Activated T-helper 1 cell treated with anti-CD3 and anti-CD28 coated beads, Interleukin-12 subunit alpha, Interleukin-12 subunit beta, Interleukin-2, Interleukin-4 antibody, amounts not matched to agents 30 ng/mL and 10 ng/mL and 1 ng/mL, durations not matched to agents 14 hours and 24 hours and 36 hours (primary cell): ENCODE measurements at regions of chr20 and their contacts with region 1.

Region 1: GRCh38 chr20:32368925-32369324 is 10.8 kb downstream of the ASXL1 start:
- DNase-seq: no peak
- H3K4me3 Mint-ChIP-seq: peak overlapping the region; percentile 3
- H3K27ac Mint-ChIP-seq: peak overlapping the region; percentile 29
- H3K4me1 Mint-ChIP-seq: peaks cover 48% of the 10 kb centered on the region
- H3K27me3 Mint-ChIP-seq: no peaks in the 10 kb centered on the region

Region 2: DNA sequence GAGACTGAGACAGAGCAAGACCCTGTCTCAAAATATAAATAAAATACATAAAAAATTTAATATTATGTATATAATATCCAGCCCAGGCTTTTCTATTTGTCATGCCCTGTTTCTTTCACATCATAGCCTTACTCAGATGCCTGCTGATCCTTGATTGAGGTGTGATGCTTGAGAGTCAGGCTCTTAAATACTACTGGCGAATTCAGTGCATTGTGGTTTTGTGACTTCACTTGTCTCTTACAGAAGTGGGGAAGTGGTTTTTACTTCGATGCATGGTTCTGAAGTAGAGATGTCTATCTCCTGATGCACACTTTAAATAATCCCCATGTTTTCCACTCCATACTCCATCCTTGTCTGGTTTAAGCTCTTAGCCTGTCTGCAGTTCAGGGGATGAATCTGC is 18.3 kb after region 1 on chr20:
- intact Hi-C with region 1: loop called (anchors 2 kb)
- DNase-seq: peak; percentile 55
- H3K4me3 Mint-ChIP-seq: no peak overlapping the region
- H3K27ac Mint-ChIP-seq: peak overlapping the region; percentile 59
- H3K4me1 Mint-ChIP-seq: peaks cover 68% of the 10 kb centered on the region
- H3K27me3 Mint-ChIP-seq: no peaks in the 10 kb centered on the region

Region 3: DNA sequence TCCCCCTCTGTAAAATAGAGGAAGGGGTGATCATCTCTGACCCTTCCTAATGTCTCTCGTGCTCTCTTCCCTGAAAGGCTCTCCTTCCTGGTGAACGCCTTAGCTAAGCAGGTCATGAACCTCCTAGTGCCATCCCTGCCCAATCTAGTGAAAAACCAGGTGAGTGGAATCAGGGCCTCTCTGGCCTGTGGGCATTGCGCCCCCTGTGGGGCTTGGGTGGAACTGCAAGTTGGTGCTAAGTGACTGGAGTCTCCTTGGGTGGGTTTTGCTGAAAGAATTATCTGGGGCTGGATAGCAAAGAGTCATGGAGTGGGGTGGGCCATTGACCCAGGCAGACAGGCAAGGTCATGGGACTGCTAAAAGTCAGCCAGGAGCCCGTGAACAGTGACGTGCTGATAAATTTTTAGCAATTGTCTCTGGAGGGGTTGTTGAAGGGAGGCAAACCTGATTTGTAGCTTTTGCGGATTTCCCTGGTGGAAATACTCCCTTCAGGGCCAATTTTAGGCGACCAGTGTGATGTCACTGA is 923.0 kb after region 1 on chr20:
- intact Hi-C with region 1: no loop called
- DNase-seq: peak; percentile 42
- H3K4me3 Mint-ChIP-seq: no peak overlapping the region
- H3K27ac Mint-ChIP-seq: no peak overlapping the region
- H3K4me1 Mint-ChIP-seq: no peaks in the 10 kb centered on the region
- H3K27me3 Mint-ChIP-seq: peaks cover 9% of the 10 kb centered on the region